ENCODE measurements at regions of chr11 and their contacts with region 1.

Region 1: DNA sequence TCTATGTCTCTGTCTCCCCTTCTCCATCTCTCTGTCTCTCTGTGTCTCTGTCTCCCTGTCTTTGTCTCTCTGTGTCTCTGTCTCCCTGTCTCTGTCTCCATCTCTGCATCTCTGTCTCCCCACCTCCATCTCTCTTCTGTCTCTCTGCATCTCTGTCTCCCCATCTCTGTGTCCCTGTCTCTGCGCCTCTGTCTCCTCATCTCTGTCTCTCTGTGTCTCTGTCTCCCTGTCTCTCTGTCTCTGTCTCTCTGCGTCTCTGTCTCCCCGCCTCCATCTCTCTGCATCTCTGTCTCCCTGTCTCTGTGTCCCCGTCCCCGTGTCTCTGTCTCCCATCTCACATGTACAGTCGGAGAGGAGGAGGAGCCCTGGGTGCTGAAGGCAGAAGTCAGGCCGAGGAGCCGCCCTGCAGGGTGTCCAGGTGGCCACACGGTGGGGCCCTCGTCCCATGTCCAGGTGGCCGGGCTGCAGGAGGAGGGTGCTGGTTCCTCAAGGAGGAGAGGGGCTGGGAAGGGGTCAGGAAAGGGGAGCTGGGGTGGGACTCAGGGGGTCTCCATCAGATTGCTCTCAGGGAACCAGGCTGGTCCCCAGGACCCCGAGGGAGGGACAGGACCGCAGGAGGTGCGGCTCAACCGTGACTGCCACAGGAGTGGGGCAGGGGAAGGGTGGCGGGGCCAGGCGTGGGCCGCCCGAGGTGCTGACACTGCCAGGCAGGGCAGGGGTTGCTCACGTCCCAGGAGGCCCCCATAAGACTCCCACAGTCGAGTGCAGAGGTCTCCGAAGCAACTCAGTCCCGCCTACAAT is 25.6 kb upstream of the TH start:
- DNase-seq: peak; percentile 48 to 96 (median 75)

Region 2: GRCh38 chr11:2077061-2077802 is 119.9 kb before region 1 on chr11:
- intact Hi-C with region 1: no loop called
- DNase-seq: peak in 1 of 10 donors; percentile 34

Region 3: GRCh38 chr11:2420502-2421225 is 223.5 kb after region 1 on chr11:
- intact Hi-C with region 1: loop called (anchors 1 kb)
- DNase-seq: peak; percentile 42 to 96 (median 74)

Region 4: GRCh38 chr11:2537896-2538724 is 340.9 kb after region 1 on chr11:
- intact Hi-C with region 1: no loop called
- DNase-seq: peak in 4 of 10 donors; percentile 1 to 59 (median 20)